ENCODE measurements at regions of chr1 and their contacts with region 1.

Region 1: GRCh38 chr1:165884690-165885304 is 57.4 kb downstream of the UCK2 start:
- DNase-seq: no peak
- ATAC-seq: peak; percentile 70
- H3K4me3 ChIP-seq: no peak overlapping the region
- H3K27ac ChIP-seq: peak overlapping the region; percentile 64
- H3K4me1 ChIP-seq: peaks cover 53% of the 10 kb centered on the region
- H3K27me3 ChIP-seq: no peaks in the 10 kb centered on the region
- CTCF ChIP-seq: no peak
- EP300 ChIP-seq: no peak
- POLR2A ChIP-seq: no peak
- RAD21 ChIP-seq: no peak

Region 2: GRCh38 chr1:165768513-165769394 is 116.0 kb before region 1 on chr1 and contains the start of gene TMCO1:
- CTCF ChIA-PET with region 1: interaction called, 5 read pairs
- POLR2A ChIA-PET with region 1: interaction called, 3 read pairs
- RAD21 ChIA-PET with region 1: interaction called, 6 read pairs
- SMC1A ChIA-PET with region 1: interaction called, 5 read pairs
- in situ Hi-C with region 1: loop called (anchors 5 kb)
- intact Hi-C with region 1: loop called (anchors 5 kb)
- DNase-seq: peak; percentile 93
- ATAC-seq: peak; percentile 98
- H3K4me3 ChIP-seq: peak within 1 kb of the TSS; percentile 79
- H3K27ac ChIP-seq: peak within 1 kb of the TSS; percentile 92
- H3K4me1 ChIP-seq: peaks cover 10% of the 10 kb centered on the region; the same call in 1 of the 2 replicates
- H3K27me3 ChIP-seq: no peaks in the 10 kb centered on the region
- CTCF ChIP-seq: peak in 2 of 3 experiments; percentile 15 to 16; a peak in 2 of 6 replicates
- EP300 ChIP-seq: no peak
- POLR2A ChIP-seq: peak; percentile 90
- RAD21 ChIP-seq: peak; percentile 35; the same call in 1 of the 2 replicates
- polyA plus RNA-seq, gene TMCO1: 184 to 253 TPM

Region 3: DNA sequence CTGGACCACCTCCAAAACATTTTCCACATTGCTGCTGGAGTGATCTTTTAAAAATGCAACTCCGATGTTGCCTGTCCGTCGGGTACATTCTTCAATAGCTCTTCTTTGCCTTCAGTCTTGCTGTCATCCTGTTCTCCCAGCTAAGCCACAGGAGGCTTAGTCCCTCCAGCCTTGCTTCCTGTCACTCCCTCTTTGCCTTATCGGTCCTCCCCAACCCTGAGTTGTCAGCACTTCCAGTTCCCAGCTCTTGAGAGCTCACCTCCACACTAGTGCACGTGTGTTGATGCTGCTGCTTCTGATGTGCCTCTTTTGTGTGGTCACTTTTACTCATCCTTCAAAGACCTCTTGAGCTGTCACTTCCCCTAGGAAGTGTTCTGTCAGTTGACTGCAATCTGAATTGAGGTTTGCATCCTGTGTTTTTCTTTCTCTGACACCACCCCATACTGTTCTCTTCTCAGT is 42.1 kb before region 1 on chr1:
- CTCF ChIA-PET with region 1: interaction called, 4 read pairs
- POLR2A ChIA-PET with region 1: interaction called, 6 read pairs
- RAD21 ChIA-PET with region 1: interaction called, 6 read pairs
- SMC1A ChIA-PET with region 1: interaction called, 21 read pairs
- in situ Hi-C with region 1: loop called (anchors 5 kb)
- intact Hi-C with region 1: loop called (anchors 5 kb)
- DNase-seq: no peak
- ATAC-seq: peak; percentile 57
- H3K4me3 ChIP-seq: no peak overlapping the region
- H3K27ac ChIP-seq: peak overlapping the region; percentile 70
- H3K4me1 ChIP-seq: peaks cover 32% of the 10 kb centered on the region
- H3K27me3 ChIP-seq: no peaks in the 10 kb centered on the region
- CTCF ChIP-seq: no peak
- EP300 ChIP-seq: no peak
- POLR2A ChIP-seq: no peak
- RAD21 ChIP-seq: no peak

Region 4: GRCh38 chr1:165857046-165857801 is 27.6 kb before region 1 on chr1:
- CTCF ChIA-PET with region 1: interaction called, 4 read pairs
- POLR2A ChIA-PET with region 1: interaction called, 7 read pairs
- RAD21 ChIA-PET with region 1: interaction called, 28 read pairs
- SMC1A ChIA-PET with region 1: interaction called, 16 read pairs
- in situ Hi-C with region 1: no loop called
- intact Hi-C with region 1: no loop called
- DNase-seq: no peak
- ATAC-seq: peak; percentile 90
- H3K4me3 ChIP-seq: no peak overlapping the region
- H3K27ac ChIP-seq: peak overlapping the region; percentile 38; the same call in 1 of the 2 replicates
- H3K4me1 ChIP-seq: peaks cover 32% of the 10 kb centered on the region
- H3K27me3 ChIP-seq: no peaks in the 10 kb centered on the region
- CTCF ChIP-seq: no peak
- EP300 ChIP-seq: peak in 1 of 2 experiments; percentile 7; a peak in 1 of 4 replicates
- POLR2A ChIP-seq: no peak
- RAD21 ChIP-seq: no peak

Region 5: GRCh38 chr1:165862448-165862847 is 22.3 kb before region 1 on chr1:
- CTCF ChIA-PET with region 1: interaction called, 4 read pairs
- POLR2A ChIA-PET with region 1: interaction called, 3 read pairs
- RAD21 ChIA-PET with region 1: interaction called, 28 read pairs
- SMC1A ChIA-PET with region 1: interaction called, 16 read pairs
- in situ Hi-C with region 1: no loop called
- intact Hi-C with region 1: no loop called
- DNase-seq: no peak
- ATAC-seq: peak; percentile 55
- H3K4me3 ChIP-seq: no peak overlapping the region
- H3K27ac ChIP-seq: peak overlapping the region; percentile 27
- H3K4me1 ChIP-seq: peaks cover 22% of the 10 kb centered on the region
- H3K27me3 ChIP-seq: no peaks in the 10 kb centered on the region
- CTCF ChIP-seq: no peak
- EP300 ChIP-seq: no peak
- POLR2A ChIP-seq: no peak
- RAD21 ChIP-seq: no peak

Region 6: GRCh38 chr1:165896277-165896676 is 11.5 kb after region 1 on chr1:
- CTCF ChIA-PET with region 1: interaction called, 3 read pairs
- POLR2A ChIA-PET with region 1: interaction called, 3 read pairs
- RAD21 ChIA-PET with region 1: interaction called, 4 read pairs
- SMC1A ChIA-PET with region 1: interaction called, 16 read pairs
- in situ Hi-C with region 1: no loop called
- intact Hi-C with region 1: no loop called
- DNase-seq: no peak
- ATAC-seq: no peak
- H3K4me3 ChIP-seq: no peak overlapping the region
- H3K27ac ChIP-seq: no peak overlapping the region
- H3K4me1 ChIP-seq: no peaks in the 10 kb centered on the region
- H3K27me3 ChIP-seq: no peaks in the 10 kb centered on the region
- CTCF ChIP-seq: no peak
- EP300 ChIP-seq: no peak
- POLR2A ChIP-seq: no peak
- RAD21 ChIP-seq: no peak

Region 7: DNA sequence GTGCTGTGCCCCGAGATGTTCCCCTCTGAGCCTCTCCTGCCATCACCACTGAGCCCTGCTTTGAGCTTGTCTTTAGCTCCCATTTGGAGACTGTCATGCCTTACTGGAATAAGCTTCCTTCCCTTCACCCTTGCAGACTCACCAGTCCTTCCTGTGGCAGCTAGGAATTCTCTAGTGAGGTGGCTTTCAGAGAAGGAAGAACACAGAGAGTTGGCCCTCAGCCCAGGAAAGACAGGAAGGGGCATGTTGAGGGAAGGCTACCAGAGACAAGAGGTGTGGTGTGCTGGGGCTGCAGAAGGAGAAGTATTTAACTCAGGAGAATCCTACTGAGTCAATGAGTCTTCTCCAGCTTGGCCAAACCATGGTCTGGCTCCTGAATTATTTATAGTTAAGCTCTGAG is 18.9 kb after region 1 on chr1:
- CTCF ChIA-PET with region 1: no interaction called
- POLR2A ChIA-PET with region 1: interaction called, 3 read pairs
- RAD21 ChIA-PET with region 1: no interaction called
- SMC1A ChIA-PET with region 1: interaction called, 22 read pairs
- in situ Hi-C with region 1: no loop called
- intact Hi-C with region 1: no loop called
- DNase-seq: no peak
- ATAC-seq: no peak
- H3K4me3 ChIP-seq: no peak overlapping the region
- H3K27ac ChIP-seq: no peak overlapping the region
- H3K4me1 ChIP-seq: no peaks in the 10 kb centered on the region
- H3K27me3 ChIP-seq: no peaks in the 10 kb centered on the region
- CTCF ChIP-seq: no peak
- EP300 ChIP-seq: no peak
- POLR2A ChIP-seq: no peak
- RAD21 ChIP-seq: no peak

Region 8: GRCh38 chr1:166064313-166064926 is 179.6 kb after region 1 on chr1:
- CTCF ChIA-PET with region 1: no interaction called
- POLR2A ChIA-PET with region 1: no interaction called
- RAD21 ChIA-PET with region 1: no interaction called
- SMC1A ChIA-PET with region 1: no interaction called
- in situ Hi-C with region 1: no loop called
- intact Hi-C with region 1: no loop called
- DNase-seq: no peak
- ATAC-seq: no peak
- H3K4me3 ChIP-seq: no peak overlapping the region
- H3K27ac ChIP-seq: no peak overlapping the region
- H3K4me1 ChIP-seq: no peaks in the 10 kb centered on the region
- H3K27me3 ChIP-seq: no peaks in the 10 kb centered on the region
- CTCF ChIP-seq: no peak
- EP300 ChIP-seq: no peak
- POLR2A ChIP-seq: no peak
- RAD21 ChIP-seq: no peak

Measured in GM12878 (cell line).